Body of pancreas (tissue), 4 donors: ENCODE measurements at regions of chr5 and their contacts with region 1.

Region 1: GRCh38 chr5:35436410-35437057 is 181.1 kb upstream of the SPEF2 start:
- DNase-seq: peak; percentile 18 to 59 (median 36)
- ATAC-seq: peak; percentile 80
- H3K4me3 ChIP-seq: no peak overlapping the region
- H3K27ac ChIP-seq: no peak overlapping the region
- H3K4me1 ChIP-seq: no peaks in the 10 kb centered on the region
- H3K27me3 ChIP-seq: no peaks in the 10 kb centered on the region
- CTCF ChIP-seq: peak; percentile 32 to 69 (median 66)
- POLR2A ChIP-seq: no peak

Region 2: DNA sequence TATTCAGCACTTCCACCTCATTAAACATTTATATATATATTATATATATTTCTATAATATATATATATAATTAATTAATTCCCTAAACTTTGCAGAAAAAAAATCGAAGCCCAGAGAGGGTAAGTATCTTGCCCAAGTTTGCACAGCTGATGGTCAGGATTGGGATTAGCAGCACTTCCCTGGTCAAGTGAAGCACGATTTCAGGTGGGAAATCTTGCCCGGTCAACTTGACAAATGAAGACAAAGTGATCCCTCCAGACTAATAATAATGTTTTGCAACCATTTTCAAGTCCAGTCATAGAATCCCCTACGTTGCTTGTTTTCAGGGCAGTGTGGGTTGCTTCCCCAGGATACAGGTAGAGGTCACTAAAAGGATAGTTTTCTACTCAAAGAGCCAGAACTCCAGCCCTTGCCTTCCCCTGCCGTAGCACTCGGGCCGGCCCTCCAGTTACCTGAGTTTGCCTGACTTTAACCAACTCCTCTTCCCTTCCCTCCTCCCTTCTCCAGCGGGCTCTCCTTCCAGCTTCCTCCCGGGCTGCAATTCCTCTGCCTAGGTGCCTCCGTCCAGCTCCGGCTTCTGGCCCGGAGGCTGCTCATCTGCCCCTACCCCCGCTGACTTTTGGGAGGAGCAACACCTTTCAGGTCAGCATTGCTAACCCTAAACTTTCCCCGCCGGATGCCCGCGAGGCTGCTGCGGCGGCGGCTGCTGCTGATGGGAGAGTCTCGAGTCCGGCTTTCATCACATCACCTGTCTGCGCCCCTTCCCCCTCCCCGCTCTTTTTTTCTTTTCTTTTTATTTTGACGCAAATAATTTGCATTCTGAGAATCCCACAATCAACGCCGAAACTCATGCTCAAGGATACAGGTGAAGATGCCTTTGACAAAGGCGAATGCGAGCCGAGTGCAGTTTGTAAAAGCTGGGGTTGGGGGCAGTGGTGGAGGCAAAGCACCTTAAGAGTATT is 207.2 kb before region 1 on chr5:
- intact Hi-C with region 1: loop called (anchors 10 kb)
- DNase-seq: peak; percentile 76 to 84 (median 82)
- ATAC-seq: peak; percentile 88
- H3K4me3 ChIP-seq: peak overlapping the region; percentile 54 to 67
- H3K27ac ChIP-seq: peak overlapping the region; percentile 63 to 95 (median 87)
- H3K4me1 ChIP-seq: peaks cover 41% of the 10 kb centered on the region
- H3K27me3 ChIP-seq: no peaks in the 10 kb centered on the region
- CTCF ChIP-seq: peak; percentile 10 to 80 (median 75)
- POLR2A ChIP-seq: peak in 2 of 3 donors; percentile 41 to 46

Region 3: GRCh38 chr5:35470866-35471265 is 34.3 kb after region 1 on chr5:
- intact Hi-C with region 1: no loop called
- DNase-seq: peak in 1 of 4 donors; percentile 5
- ATAC-seq: peak; percentile 35
- H3K4me3 ChIP-seq: no peak overlapping the region
- H3K27ac ChIP-seq: no peak overlapping the region
- H3K4me1 ChIP-seq: no peaks in the 10 kb centered on the region
- H3K27me3 ChIP-seq: no peaks in the 10 kb centered on the region
- CTCF ChIP-seq: no peak
- POLR2A ChIP-seq: no peak